ENCODE measurements at regions of chr3 and their contacts with region 1.

Region 1: GRCh38 chr3:69410250-69410649 is 24.4 kb upstream of the FRMD4B start:
- DNase-seq: peak; percentile 68 to 91 (median 75)
- H3K4me3 ChIP-seq: no peak overlapping the region
- H3K27ac ChIP-seq: peak overlapping the region in 2 of 5 donors; percentile 17 to 70
- H3K4me1 ChIP-seq: no peaks in the 10 kb centered on the region
- H3K27me3 ChIP-seq: no peaks in the 10 kb centered on the region
- CTCF ChIP-seq: peak; percentile 67 to 89 (median 77)
- POLR2A ChIP-seq: no peak

Region 2: DNA sequence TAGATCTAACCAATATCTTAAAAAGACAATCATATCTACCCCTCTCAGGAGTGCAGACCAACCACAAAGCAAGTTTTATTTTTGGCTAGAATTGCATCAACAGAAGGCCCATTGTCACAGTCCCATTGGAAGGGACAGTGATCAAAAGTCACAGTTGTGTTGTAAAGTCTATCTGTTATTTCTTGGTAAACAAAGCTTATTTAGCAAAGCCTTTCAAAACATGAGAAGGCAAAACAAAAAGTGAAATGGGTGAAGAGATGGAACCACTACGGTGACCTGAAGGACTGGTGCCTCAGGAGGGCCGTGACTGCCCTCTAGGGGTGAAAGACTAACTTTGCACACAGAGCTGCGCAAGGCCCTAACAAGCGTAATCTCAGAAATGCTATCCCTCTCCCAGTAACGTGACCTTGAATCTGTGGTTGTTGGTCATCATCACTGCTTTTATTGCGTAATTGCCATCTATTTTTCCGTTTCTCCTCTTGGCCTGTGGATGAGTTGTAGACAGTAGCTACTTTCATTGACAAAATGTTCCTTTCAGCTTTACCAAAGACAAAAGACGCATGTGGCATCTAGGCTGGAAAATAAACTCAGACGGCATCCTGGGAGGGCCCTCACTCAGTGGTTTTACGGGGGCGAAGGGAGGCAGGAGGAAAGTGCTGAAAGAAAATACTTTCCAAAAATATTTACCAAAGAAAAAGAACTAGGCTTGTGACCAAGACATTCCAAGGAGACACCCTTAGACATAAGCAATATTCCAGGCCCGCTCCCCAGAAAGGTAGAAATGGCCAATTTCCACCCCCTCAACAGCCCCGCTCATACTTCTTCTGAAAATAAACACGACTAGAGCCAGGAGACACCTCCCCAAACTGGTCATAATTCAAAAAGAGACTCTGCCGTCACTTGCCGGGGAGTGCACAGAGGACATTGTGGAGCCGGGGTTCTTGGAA is 103.7 kb before region 1 on chr3:
- intact Hi-C with region 1: loop called in 1 of 2 experiments (anchors 10 kb)
- DNase-seq: peak; percentile 79 to 89 (median 85)
- H3K4me3 ChIP-seq: no peak overlapping the region
- H3K27ac ChIP-seq: peak overlapping the region in 3 of 5 donors; percentile 40 to 60 (median 50)
- H3K4me1 ChIP-seq: peaks cover 0 to 11% of the 10 kb centered on the region in 2 donors
- H3K27me3 ChIP-seq: no peaks in the 10 kb centered on the region
- CTCF ChIP-seq: peak; percentile 83 to 95 (median 91)
- POLR2A ChIP-seq: no peak

Measured in adrenal gland (tissue), 19 donors.